ENCODE measurements at regions of chr1 and their contacts with region 1.

Region 1: DNA sequence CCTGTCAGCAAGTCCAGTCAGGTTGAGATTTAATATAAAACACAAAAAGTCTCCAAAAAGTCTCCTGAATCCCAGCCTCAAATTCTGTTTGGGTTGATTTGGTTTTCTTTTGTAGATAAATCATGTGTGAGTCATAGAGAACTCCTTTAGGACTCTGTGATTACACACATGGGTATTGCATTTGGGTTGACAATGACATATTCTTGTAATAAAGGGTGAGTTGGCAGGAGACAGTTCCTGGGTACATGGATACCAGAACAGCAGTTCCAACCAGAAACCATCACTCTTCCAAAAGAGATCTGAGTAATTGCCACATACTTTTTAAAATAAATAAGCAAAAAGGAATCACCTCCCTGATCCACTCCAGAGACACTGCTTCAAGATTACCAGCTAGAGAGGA is 8.9 kb downstream of the CR2 start:
- DNase-seq: no peak
- H3K4me3 ChIP-seq: no peak overlapping the region
- H3K27ac ChIP-seq: no peak overlapping the region
- H3K4me1 ChIP-seq: no peaks in the 10 kb centered on the region
- H3K27me3 ChIP-seq: no peaks in the 10 kb centered on the region
- CTCF ChIP-seq: no peak

Region 2: GRCh38 chr1:207745839-207746767 is 283.1 kb after region 1 on chr1:
- CTCF ChIA-PET with region 1: no interaction called
- POLR2A ChIA-PET with region 1: interaction called, 11 read pairs
- intact Hi-C with region 1: no loop called
- DNase-seq: peak; percentile 53 to 93
- H3K4me3 ChIP-seq: no peak overlapping the region
- H3K27ac ChIP-seq: 0 out of 2 replicates have a peak overlapping the region, but pooled peaks have one; percentile 1
- H3K4me1 ChIP-seq: peaks cover 66% of the 10 kb centered on the region
- H3K27me3 ChIP-seq: no peaks in the 10 kb centered on the region
- CTCF ChIP-seq: no peak

Region 3: DNA sequence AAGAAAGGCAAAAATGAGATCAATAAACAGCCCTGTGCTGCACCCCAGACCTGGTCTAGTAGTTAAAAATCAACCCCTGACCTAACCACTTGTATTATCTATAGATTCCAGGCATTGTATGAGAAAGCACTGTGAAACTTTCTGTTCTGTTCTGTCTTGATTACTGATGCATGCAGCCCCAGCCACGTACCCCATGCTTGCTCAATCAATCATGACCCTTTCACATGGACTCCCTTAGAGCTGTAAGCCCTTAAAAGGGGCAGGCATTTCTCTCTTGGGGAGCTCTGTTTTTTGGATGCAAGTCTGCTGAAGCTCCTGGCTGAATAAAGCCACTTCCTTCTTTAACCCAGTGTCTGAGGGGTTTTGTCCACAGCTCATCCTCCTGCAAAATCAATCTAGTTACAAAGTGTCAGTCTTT is 472.2 kb after region 1 on chr1:
- CTCF ChIA-PET with region 1: no interaction called
- POLR2A ChIA-PET with region 1: no interaction called
- intact Hi-C with region 1: no loop called
- DNase-seq: no peak
- H3K4me3 ChIP-seq: no peak overlapping the region
- H3K27ac ChIP-seq: no peak overlapping the region
- H3K4me1 ChIP-seq: no peaks in the 10 kb centered on the region
- H3K27me3 ChIP-seq: no peaks in the 10 kb centered on the region
- CTCF ChIP-seq: no peak

Region 4: GRCh38 chr1:208036109-208036808 is 573.2 kb after region 1 on chr1:
- CTCF ChIA-PET with region 1: no interaction called
- POLR2A ChIA-PET with region 1: no interaction called
- intact Hi-C with region 1: no loop called
- DNase-seq: no peak
- H3K4me3 ChIP-seq: no peak overlapping the region
- H3K27ac ChIP-seq: no peak overlapping the region
- H3K4me1 ChIP-seq: no peaks in the 10 kb centered on the region
- H3K27me3 ChIP-seq: no peaks in the 10 kb centered on the region
- CTCF ChIP-seq: peak; percentile 52; the same call in 1 of the 2 replicates

Measured in PC-9 (cell line).